ENCODE measurements at regions of chr3 and their contacts with region 1.

Region 1: DNA sequence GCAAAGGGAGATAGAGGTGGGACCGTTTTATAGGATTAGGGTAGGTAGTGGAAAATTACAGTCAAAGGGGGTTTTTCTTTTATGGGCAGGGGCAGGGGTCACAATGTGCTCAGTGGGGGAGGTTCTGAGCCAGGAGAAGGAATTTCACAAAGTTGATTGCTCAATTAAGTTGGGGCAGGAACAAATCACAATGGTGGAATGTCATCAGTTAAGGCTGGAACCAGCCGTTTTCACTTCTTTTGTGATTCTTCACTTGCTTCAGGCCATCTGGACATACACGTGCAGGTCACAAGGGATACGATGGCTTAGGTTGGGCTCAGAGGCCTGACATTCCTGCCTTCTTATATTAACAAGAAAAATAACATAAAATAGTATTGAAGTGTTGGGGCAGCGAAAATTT is 453.8 kb downstream of the VGLL3 start:
- DNase-seq: no peak
- CTCF ChIP-seq: no peak

Region 2: DNA sequence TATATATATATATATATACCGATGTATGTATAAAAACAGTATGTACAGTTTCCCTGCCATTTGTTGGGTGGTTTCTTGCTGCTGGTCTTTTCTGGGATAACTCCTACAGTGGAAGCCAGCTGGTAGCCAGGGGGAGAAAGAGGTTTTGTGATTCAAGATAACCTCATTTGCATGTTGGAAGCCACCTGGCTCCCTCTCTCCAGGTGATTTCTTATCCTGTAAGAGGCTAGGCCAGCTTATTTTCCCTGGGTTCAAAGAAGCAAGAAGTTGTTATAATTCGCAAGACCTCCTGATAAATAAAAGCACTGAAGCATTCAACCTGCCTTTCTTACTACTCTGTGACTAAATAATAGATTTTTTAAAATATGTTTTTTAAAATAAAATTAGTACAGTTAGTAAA is 10.5 kb after region 1 on chr3:
- CTCF ChIA-PET with region 1: interaction called, 15 read pairs
- POLR2A ChIA-PET with region 1: no interaction called
- DNase-seq: no peak
- CTCF ChIP-seq: no peak

Region 3: GRCh38 chr3:86618706-86619105 is 81.5 kb after region 1 on chr3:
- CTCF ChIA-PET with region 1: no interaction called
- POLR2A ChIA-PET with region 1: no interaction called
- DNase-seq: no peak
- CTCF ChIP-seq: no peak

Region 4: GRCh38 chr3:86645756-86646155 is 108.6 kb after region 1 on chr3:
- CTCF ChIA-PET with region 1: no interaction called
- POLR2A ChIA-PET with region 1: no interaction called
- DNase-seq: no peak
- CTCF ChIP-seq: no peak

Measured in GM10248 (cell line).